Activated naive CD4-positive, alpha-beta T cell treated with anti-CD3 and anti-CD28 coated beads for 36 hours (primary cell): ENCODE measurements at regions of chr21 and their contacts with region 1.

Region 1: DNA sequence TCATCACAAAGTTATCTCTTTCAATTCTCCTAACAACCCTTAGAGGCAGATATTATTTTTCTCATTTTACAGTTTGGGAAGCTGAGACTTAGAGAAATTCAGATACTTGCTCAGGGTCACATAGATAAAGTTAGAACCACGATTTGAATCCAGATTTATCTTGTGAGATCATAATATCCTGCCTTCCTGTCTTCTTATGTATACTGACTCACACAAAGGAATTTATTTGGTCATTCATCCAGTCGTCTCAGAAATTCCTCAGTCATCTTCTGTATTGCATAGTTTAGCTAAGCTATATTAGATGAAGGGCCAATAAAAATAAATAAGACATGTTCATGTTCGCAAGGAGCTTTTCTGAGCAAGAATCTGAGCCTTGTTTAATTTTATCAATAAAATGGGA is 35.8 kb upstream of the RUNX1 start:
- DNase-seq: no peak
- H3K4me3 Mint-ChIP-seq: no peak overlapping the region
- H3K27ac Mint-ChIP-seq: no peak overlapping the region
- H3K4me1 Mint-ChIP-seq: peaks cover 32% of the 10 kb centered on the region
- H3K27me3 Mint-ChIP-seq: peaks cover 3% of the 10 kb centered on the region

Region 2: GRCh38 chr21:34967509-34968289 is 117.2 kb before region 1 on chr21:
- CTCF ChIA-PET with region 1: no interaction called
- intact Hi-C with region 1: loop called (anchors 1 kb)
- DNase-seq: peak; percentile 73
- H3K4me3 Mint-ChIP-seq: peak overlapping the region; percentile 47
- H3K27ac Mint-ChIP-seq: peak overlapping the region; percentile 93
- H3K4me1 Mint-ChIP-seq: peaks cover 84% of the 10 kb centered on the region
- H3K27me3 Mint-ChIP-seq: no peaks in the 10 kb centered on the region

Region 3: GRCh38 chr21:35045542-35046262 is 39.2 kb before region 1 on chr21:
- CTCF ChIA-PET with region 1: interaction called, 11 read pairs
- intact Hi-C with region 1: loop called (anchors 1 kb)
- DNase-seq: peak; percentile 59
- H3K4me3 Mint-ChIP-seq: peak overlapping the region; percentile 86
- H3K27ac Mint-ChIP-seq: peak overlapping the region; percentile 97
- H3K4me1 Mint-ChIP-seq: peaks cover 81% of the 10 kb centered on the region
- H3K27me3 Mint-ChIP-seq: no peaks in the 10 kb centered on the region

Region 4: GRCh38 chr21:35113064-35113463 is 28.2 kb after region 1 on chr21:
- CTCF ChIA-PET with region 1: no interaction called
- intact Hi-C with region 1: no loop called
- DNase-seq: peak; percentile 52
- H3K4me3 Mint-ChIP-seq: no peak overlapping the region
- H3K27ac Mint-ChIP-seq: peak overlapping the region; percentile 47
- H3K4me1 Mint-ChIP-seq: peaks cover 18% of the 10 kb centered on the region
- H3K27me3 Mint-ChIP-seq: no peaks in the 10 kb centered on the region

Region 5: GRCh38 chr21:35150562-35151226 is 65.8 kb after region 1 on chr21:
- CTCF ChIA-PET with region 1: interaction called, 4 read pairs
- intact Hi-C with region 1: loop called (anchors 2 kb)
- DNase-seq: no peak
- H3K4me3 Mint-ChIP-seq: no peak overlapping the region
- H3K27ac Mint-ChIP-seq: peak overlapping the region; percentile 91
- H3K4me1 Mint-ChIP-seq: peaks cover 52% of the 10 kb centered on the region
- H3K27me3 Mint-ChIP-seq: no peaks in the 10 kb centered on the region

Region 6: DNA sequence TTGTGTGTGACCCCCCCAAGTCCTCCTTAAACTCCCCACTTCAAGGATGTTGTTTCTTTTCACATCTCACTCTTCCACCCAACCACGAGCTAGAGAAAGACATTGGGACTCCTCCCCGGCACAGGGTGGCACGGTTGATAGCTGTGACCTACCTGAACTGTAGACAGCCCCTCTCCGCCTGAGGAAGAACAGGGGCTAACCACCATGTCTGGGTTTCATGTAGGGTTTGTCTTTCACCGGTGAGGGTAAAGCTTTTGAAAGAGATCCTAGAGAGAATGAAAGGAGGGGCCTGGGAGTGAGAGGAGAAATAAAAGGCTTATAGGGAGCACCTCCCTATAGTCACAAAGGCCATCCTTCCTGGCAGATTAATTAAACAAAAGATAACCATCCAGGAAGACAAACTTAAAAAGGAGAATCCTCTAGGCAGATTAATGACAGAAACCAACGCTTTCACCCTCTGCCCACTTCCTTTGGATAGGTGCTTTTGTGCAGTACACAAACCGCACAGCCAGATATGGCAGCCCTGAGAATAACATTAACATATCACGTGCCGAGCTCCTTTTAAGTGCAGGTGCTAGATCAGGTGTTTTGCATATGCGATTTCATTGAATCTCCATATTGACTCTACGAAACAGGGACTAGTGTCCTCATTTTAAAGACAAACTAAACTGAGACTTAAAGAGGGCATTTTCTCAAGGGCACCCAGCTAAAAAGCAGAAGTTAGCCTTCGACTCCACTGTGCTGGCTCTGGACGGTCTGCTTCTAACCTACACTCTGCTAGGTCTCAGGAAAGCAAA is 142.3 kb after region 1 on chr21:
- CTCF ChIA-PET with region 1: no interaction called
- intact Hi-C with region 1: loop called (anchors 1 kb)
- DNase-seq: peak; percentile 87
- H3K4me3 Mint-ChIP-seq: peak overlapping the region; percentile 66
- H3K27ac Mint-ChIP-seq: peak overlapping the region; percentile 87
- H3K4me1 Mint-ChIP-seq: peaks cover 39% of the 10 kb centered on the region
- H3K27me3 Mint-ChIP-seq: no peaks in the 10 kb centered on the region

Region 7: GRCh38 chr21:35358008-35358407 is 273.1 kb after region 1 on chr21:
- CTCF ChIA-PET with region 1: no interaction called
- intact Hi-C with region 1: loop called (anchors 1 kb)
- DNase-seq: no peak
- H3K4me3 Mint-ChIP-seq: no peak overlapping the region
- H3K27ac Mint-ChIP-seq: peak overlapping the region; percentile 68
- H3K4me1 Mint-ChIP-seq: peaks cover 13% of the 10 kb centered on the region
- H3K27me3 Mint-ChIP-seq: no peaks in the 10 kb centered on the region

Region 8: GRCh38 chr21:35909456-35910223 is 824.8 kb after region 1 on chr21:
- CTCF ChIA-PET with region 1: no interaction called
- intact Hi-C with region 1: no loop called
- DNase-seq: no peak
- H3K4me3 Mint-ChIP-seq: no peak overlapping the region
- H3K27ac Mint-ChIP-seq: no peak overlapping the region
- H3K4me1 Mint-ChIP-seq: no peaks in the 10 kb centered on the region
- H3K27me3 Mint-ChIP-seq: peaks cover 3% of the 10 kb centered on the region